ENCODE measurements at regions of chr4 and their contacts with region 1.

Region 1: GRCh38 chr4:41339812-41340809 is 83.4 kb downstream of the UCHL1 start:
- DNase-seq: peak in 6 of 10 donors; percentile 16 to 85 (median 48)

Region 2: GRCh38 chr4:41307638-41308037 is 32.5 kb before region 1 on chr4:
- intact Hi-C with region 1: no loop called
- DNase-seq: no peak

Region 3: DNA sequence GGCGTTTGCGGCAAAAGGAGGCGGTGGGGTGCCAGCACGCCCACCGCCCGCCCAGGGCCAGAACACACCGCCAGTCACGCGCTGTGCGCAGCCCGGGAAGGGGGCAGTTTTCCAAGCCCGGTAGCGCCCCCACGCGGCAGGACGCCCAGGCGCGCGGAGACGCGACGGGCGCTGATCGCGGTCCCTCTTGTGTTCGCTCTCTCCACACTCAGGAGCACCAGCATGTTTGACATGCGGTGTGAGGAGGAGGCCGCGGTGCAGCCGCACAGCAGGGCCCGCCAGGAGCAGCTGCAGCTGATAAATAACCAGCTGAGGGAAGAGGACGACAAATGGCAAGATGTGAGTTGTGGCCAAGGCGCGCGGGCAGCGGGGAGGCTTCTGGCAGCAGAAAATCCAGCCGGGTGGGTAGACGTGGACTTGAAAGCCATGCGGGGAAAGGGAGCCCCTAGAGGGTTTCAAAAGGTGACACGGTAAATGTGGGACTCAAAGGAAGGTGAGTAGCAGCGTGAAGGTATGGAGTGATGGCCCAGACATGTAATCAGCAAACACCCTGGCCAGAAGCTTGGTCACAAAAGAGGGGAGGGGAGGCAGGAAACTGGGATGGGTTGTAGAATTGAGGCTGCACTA is 304.3 kb after region 1 on chr4:
- intact Hi-C with region 1: loop called (anchors 1 kb)
- DNase-seq: peak; percentile 72 to 97 (median 84)

Region 4: GRCh38 chr4:41661442-41662076 is 321.4 kb after region 1 on chr4:
- intact Hi-C with region 1: loop called (anchors 1 kb)
- DNase-seq: peak; percentile 28 to 94 (median 68)

Measured in posterior cingulate gyrus (tissue), 11 donors.